Activated CD4-positive, alpha-beta T cell treated with anti-CD3 and anti-CD28 coated beads, Interleukin-2, amount 10 ng/mL, durations not matched to agents 24 days and 14 days (primary cell): ENCODE measurements at regions of chrX and their contacts with region 1.

Region 1: DNA sequence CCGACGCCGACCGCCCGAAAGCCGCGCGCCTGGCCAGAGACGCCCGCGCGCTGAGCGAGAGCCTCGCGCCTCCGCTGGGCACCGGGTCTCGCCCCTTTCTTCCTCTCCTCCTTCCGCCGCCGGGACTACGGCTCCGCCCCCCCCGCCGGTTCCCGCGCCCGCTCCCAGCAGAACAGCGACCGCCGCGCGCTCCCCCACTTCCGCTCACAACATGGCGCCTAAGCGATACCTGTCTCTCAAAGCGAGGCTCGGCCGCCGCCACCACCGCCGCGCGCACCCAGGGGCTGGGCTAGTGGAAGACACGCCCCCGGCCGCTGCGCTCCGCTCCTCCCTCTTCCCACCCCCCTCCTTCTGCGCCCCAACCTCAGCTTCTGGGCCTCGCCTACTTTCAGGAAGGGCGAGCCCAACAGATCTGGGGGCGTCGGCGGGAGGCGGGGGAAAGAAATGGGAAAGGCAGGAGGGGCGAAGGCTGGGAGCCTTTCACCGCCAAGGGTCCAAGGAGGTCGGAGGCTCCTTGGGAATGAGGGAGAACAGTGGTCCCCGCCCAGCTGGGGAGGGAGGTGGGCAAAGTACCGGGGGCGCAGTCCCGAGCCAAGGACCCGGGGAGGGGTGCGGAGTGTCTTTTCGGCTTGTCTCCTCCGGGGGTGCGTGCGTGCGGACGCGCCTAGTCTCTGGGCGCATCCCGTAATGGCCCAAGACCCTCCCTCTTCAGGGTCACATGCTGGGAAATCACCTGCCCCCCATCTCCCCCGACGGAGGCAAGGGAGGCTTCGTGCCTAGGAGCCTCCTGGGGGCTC is at the start of gene RPS6KA3:
- DNase-seq: peak; percentile 96
- H3K4me3 Mint-ChIP-seq: peak within 1 kb of the TSS; percentile 92
- H3K27ac Mint-ChIP-seq: peak within 1 kb of the TSS; percentile 96
- H3K4me1 Mint-ChIP-seq: peaks cover 12% of the 10 kb centered on the region
- H3K27me3 Mint-ChIP-seq: peaks cover 7% of the 10 kb centered on the region
- total RNA-seq, gene RPS6KA3: 49.8 and 51.1 TPM in 2 replicates

Region 2: DNA sequence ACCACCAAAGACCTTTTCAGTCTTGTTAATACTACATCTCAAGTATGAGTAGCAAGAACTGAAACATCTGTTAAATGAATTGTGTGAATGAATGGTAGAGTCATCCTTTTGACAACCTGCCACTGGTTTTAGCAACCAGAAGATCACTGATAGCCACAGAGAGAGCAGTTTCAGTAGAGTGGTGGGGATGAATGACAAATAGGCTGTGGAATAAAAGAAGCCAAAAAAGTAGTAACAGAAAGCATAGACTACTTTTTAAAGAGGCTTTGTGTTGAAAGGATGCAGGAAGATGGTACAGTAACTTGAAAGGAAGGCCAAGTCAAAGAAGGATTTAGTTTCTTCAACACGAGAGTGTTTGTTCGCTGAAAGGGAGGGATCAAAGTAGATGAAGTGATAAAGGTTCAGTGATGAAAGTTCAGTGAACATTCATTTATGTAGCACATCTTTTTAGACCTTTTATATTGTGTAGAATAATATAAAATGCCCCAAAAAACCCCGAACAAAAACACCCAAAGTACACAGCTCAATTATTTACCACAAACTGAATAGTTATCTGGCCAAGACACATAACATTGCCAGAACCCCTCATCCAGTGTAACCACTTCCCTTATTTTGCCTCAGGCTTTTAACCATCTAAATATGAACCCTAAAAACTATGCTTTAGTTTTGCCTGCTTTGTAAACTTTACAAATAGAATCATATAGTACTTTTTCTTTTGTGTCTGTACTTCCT is 85.2 kb before region 1 on chrX:
- intact Hi-C with region 1: loop called (anchors 1 kb)
- DNase-seq: no peak
- H3K4me3 Mint-ChIP-seq: no peak overlapping the region
- H3K27ac Mint-ChIP-seq: peak overlapping the region; percentile 78
- H3K4me1 Mint-ChIP-seq: peaks cover 14% of the 10 kb centered on the region
- H3K27me3 Mint-ChIP-seq: no peaks in the 10 kb centered on the region

Region 3: GRCh38 chrX:20333672-20334071 is 66.7 kb after region 1 on chrX:
- intact Hi-C with region 1: loop called (anchors 5 kb)
- DNase-seq: no peak
- H3K4me3 Mint-ChIP-seq: no peak overlapping the region
- H3K27ac Mint-ChIP-seq: no peak overlapping the region
- H3K4me1 Mint-ChIP-seq: peaks cover 4% of the 10 kb centered on the region
- H3K27me3 Mint-ChIP-seq: no peaks in the 10 kb centered on the region

Region 4: DNA sequence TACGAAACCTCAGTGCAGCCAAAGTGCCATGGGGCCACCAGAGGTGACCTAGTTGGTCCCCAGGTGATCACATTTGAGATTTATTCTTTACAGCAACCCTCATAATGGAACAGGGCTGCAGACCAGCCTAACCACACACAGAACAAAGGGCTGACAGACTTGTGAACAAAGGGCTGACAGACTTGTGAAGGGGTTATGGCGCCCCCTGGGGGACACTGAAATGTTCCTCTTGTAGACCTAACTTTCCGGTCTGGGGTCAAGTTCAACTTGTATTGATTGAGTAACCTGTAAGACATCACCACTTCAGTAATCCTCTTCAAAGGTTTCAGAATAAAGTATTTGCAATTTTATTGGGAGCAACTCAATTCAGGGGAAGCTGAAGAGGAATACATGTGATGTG is 175.6 kb after region 1 on chrX:
- intact Hi-C with region 1: loop called (anchors 5 kb)
- DNase-seq: peak; percentile 92
- H3K4me3 Mint-ChIP-seq: no peak overlapping the region
- H3K27ac Mint-ChIP-seq: no peak overlapping the region
- H3K4me1 Mint-ChIP-seq: peaks cover 29% of the 10 kb centered on the region
- H3K27me3 Mint-ChIP-seq: peaks cover 2% of the 10 kb centered on the region

Region 5: DNA sequence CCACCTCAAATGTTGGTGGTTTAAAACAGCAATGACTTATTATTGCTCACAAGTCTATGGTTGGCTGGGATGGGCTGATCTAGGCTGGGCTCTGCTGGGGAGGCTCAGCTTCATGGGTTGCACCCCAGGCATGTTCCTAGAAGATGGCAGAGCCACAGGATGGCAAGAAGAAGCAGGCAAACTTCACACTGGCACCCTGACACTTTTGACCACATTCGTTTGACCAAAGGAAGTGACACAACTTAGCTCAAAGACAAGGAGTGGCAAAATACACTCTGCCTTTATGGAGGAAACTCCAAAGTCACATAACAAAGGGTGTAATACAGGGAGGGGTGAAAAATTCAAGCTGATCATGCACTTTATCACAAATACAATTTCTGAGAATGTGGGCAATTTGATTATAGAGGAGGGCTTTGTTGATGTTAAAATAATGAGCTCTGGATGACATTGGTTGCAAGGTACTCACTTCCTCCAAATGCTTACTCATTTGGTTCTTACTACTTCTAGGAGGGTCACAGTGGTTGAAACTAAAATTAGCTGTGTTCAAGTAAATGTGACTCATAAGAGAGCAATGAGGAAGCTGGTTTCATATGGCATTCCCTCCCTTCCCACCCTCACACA is 248.9 kb after region 1 on chrX:
- intact Hi-C with region 1: loop called (anchors 5 kb)
- DNase-seq: peak; percentile 69
- H3K4me3 Mint-ChIP-seq: peak overlapping the region; percentile 45
- H3K27ac Mint-ChIP-seq: peak overlapping the region; percentile 91
- H3K4me1 Mint-ChIP-seq: peaks cover 40% of the 10 kb centered on the region
- H3K27me3 Mint-ChIP-seq: peaks cover 9% of the 10 kb centered on the region